HAP-1 (cell line): ENCODE measurements at regions of chr1 and their contacts with region 1.

Region 1: DNA sequence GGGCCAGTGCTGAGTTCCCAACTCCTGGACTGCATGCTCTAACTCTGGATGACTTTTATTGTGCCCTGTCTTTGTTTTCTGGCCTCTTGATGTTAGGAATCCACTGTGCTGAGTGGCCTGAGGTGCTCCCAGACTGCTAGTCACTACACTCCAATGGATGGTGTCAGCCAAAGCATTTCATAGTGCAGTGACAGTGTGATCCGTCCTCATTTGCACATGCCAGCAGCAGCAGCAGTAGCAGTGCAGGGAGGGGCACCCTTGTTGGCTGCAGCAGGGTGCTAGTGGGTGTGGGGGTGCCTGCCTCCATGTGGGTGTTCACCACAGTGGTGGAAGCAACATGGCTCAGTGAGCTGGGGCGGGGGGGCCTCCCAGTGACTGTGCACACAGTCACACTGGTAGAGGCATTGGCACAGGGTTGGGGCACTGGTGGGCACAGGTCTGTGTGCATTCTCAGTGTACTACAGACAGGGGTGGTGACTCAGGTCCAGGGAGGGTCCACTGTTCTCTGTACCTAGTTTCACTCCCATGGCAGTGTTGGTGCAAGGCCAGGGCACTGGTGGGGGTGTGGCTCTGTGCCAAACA is 214.0 kb downstream of the ZC3H11B start:
- DNase-seq: no peak
- H3K4me3 ChIP-seq: no peak overlapping the region
- H3K4me1 ChIP-seq: peaks cover 9% of the 10 kb centered on the region
- H3K27me3 ChIP-seq: no peaks in the 10 kb centered on the region

Region 2: GRCh38 chr1:219041141-219041540 is 357.8 kb before region 1 on chr1:
- in situ Hi-C with region 1: no loop called
- DNase-seq: no peak
- H3K4me3 ChIP-seq: no peak overlapping the region
- H3K4me1 ChIP-seq: peaks cover 32% of the 10 kb centered on the region
- H3K27me3 ChIP-seq: no peaks in the 10 kb centered on the region

Region 3: GRCh38 chr1:219173758-219174588 is 224.9 kb before region 1 on chr1 and contains the start of gene LYPLAL1:
- in situ Hi-C with region 1: no loop called
- DNase-seq: peak; percentile 78 to 89
- H3K4me3 ChIP-seq: peak within 1 kb of the TSS; percentile 64
- H3K4me1 ChIP-seq: peaks cover 21% of the 10 kb centered on the region
- H3K27me3 ChIP-seq: no peaks in the 10 kb centered on the region

Region 4: DNA sequence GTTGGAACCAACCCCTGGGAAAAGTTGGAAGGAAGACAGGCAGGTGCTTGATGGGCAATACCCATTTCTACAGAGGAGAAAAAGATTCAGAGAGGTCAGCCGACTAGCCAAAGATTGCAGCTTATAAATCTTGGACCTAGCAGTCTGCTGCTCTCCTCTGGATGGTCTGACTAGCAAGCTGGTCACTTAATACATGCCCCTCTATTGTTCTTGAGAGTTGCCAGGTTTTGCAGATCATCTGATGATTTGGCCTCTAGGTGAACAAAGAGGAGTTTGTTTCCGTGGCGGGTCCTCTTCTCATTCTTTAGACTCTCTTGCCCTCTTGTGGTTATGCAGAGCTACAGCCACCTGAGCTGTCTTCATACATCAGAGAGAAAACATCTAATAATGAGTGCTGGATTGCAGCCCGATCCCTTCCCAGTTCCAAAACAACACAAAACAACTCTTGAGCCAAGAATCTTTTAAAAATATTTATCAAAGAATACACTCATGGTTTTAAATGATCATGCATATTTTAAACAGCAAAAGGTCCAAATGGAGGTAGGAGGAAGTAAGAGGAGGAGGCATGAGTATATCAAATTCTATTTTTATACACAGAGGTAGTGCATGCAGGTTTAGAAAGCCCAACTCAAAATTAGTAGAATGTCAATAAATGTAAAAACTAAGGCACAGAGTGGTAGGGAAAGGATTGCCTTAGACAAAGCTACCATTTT is 413.7 kb after region 1 on chr1:
- in situ Hi-C with region 1: loop called (anchors 10 kb)
- DNase-seq: peak; percentile 69 to 83
- H3K4me3 ChIP-seq: no peak overlapping the region
- H3K4me1 ChIP-seq: peaks cover 5% of the 10 kb centered on the region; the same call in 1 of the 2 replicates
- H3K27me3 ChIP-seq: peaks cover 39% of the 10 kb centered on the region